ENCODE measurements at regions of chr2 and their contacts with region 1.

Region 1: DNA sequence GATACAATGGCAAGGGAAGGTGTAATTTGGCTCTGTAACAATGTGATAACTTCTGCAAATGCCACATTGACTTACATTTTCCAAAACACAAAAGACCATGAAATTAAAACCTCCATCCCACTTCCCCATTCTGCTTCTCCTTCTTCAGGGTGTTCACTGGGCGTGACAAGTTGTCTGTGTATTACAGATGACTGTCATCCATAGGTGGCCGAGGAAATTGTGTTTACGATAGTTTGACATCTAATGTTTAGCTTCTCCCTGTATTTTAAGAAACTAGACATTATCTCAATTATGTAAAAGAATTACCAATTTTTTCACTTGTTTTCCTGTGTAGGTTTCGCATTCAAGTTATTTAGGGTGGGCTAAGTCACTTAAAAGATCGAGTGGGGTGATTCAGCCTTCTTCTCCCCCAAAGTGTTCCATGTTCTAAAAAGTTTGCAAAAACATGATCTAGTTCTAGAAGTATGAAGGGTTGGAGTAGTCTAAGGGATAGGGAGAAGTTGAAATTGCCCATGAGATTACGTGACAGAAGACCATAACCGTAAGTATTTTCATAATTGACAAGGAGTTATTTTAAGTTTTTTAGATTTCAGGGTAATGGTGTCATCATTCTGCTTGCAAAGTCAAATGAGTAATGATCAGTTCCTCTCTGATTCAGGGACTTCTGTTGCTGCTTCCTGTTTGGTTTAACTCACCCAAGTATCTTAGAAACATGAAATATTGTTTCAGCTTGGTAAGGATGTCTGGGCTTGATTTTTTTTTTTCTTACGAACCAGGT is 25.2 kb upstream of the CYTIP start:
- DNase-seq: no peak
- ATAC-seq: peak; percentile 67
- H3K4me3 Mint-ChIP-seq: peak overlapping the region; percentile 68
- H3K27ac Mint-ChIP-seq: peak overlapping the region; percentile 94
- H3K4me1 Mint-ChIP-seq: peaks cover 95% of the 10 kb centered on the region
- H3K27me3 Mint-ChIP-seq: no peaks in the 10 kb centered on the region

Region 2: DNA sequence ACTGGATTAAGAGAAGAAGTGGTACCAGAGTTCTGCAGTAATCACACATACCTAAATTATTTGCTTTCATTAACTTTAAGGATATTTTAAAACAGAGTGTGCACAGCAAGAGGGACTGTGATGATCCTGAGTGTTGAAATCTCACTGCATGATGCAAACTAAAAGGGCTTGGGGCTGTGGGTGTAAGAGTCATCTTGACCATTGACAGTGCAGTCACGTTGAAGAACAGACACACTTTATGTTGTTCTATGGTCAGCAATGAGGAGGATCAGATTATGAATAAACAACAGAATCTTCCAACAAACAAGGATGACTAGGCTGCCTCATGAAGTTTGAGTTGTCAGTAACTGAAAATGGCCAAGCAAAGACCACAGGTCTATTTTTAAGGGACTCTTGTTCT is 298.8 kb before region 1 on chr2:
- CTCF ChIA-PET with region 1: no interaction called
- POLR2A ChIA-PET with region 1: no interaction called
- intact Hi-C with region 1: no loop called
- DNase-seq: no peak
- ATAC-seq: no peak
- H3K4me3 Mint-ChIP-seq: no peak overlapping the region
- H3K27ac Mint-ChIP-seq: no peak overlapping the region
- H3K4me1 Mint-ChIP-seq: no peaks in the 10 kb centered on the region
- H3K27me3 Mint-ChIP-seq: peaks cover 8% of the 10 kb centered on the region

Region 3: DNA sequence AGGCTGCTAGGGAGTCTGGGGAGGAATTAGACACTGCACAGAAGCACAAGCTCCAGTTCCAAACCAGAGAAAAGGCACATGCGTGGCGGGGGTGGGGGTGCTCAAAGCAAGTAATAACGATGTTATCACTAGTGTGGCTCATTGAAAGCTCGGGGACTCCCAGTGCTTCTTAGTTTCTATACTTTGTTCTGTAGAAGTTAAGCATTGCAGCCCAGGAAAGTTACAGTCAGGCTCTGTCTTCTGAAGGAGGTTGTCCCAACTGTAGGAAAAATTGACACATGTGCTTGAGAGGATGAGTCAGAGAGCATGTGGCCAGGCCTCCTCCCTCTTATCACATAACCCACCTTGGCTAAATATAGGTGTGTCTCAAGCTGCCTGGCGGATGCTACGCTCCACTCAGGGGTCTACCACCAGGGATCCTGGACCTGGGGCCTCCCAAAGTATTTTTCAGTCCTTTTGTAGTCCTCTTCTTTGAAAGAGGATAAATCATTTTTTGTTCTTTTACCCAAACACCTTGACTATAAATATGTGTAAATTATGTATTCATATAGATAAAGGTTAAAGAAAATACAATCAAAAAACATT is 207.8 kb before region 1 on chr2:
- CTCF ChIA-PET with region 1: no interaction called
- POLR2A ChIA-PET with region 1: no interaction called
- intact Hi-C with region 1: loop called in 1 of 2 experiments (anchors 1 kb)
- DNase-seq: peak; percentile 84
- ATAC-seq: peak; percentile 79
- H3K4me3 Mint-ChIP-seq: peak overlapping the region; percentile 4
- H3K27ac Mint-ChIP-seq: peak overlapping the region; percentile 26
- H3K4me1 Mint-ChIP-seq: peaks cover 38% of the 10 kb centered on the region
- H3K27me3 Mint-ChIP-seq: peaks cover 12% of the 10 kb centered on the region

Region 4: DNA sequence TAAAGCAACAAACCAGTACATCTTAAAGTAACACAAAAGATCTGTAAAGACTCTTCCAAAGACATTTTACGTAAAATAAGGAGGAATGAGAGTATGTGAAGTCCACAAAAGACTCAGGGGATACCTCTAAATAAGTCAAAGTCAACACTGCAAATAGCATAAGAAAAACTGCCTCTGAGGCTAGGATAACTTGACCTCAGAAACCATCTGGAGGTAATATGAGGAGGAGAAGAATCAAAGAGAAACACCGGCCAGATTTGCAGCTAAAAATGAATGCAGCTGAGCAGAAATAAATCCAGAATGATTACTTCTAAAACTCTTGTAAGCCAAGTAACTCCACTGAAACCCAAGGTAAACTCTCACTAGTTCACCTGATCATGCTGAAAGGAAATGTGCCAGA is 91.3 kb before region 1 on chr2:
- CTCF ChIA-PET with region 1: no interaction called
- POLR2A ChIA-PET with region 1: no interaction called
- intact Hi-C with region 1: no loop called
- DNase-seq: no peak
- ATAC-seq: no peak
- H3K4me3 Mint-ChIP-seq: no peak overlapping the region
- H3K27ac Mint-ChIP-seq: no peak overlapping the region
- H3K4me1 Mint-ChIP-seq: peaks cover 36% of the 10 kb centered on the region
- H3K27me3 Mint-ChIP-seq: no peaks in the 10 kb centered on the region

Region 5: DNA sequence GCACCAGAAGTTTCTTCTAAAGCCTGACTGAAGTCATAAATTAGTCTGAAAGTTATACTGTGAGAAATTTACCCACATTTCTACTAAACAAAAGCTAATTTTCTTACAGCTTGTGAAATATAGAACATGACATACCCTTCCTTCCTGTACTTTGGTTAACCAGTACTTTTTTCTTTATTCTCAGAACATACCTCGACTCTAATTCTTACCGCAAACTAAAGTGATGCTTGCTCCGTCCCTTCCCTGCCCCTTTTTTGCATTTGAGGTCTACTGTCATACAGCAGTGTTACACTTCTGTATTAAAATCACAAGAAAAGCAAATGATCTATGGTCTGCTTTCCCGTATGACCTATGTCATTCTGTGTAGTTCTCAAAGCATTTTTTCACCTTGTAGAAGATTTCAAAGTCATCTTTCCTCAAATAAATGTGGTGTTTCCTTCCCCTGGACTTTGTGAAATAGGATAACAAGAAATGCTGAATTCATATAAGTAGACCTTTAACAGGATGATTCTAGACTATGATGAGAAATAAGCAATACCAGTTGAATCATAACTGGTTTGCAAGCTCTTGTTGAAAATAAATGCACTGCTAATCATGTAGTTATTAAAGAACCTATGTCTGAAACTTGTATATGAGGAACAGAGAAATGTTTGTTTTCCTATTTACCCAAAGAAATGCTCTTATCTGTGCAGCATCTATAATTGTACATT is 55.6 kb before region 1 on chr2:
- CTCF ChIA-PET with region 1: interaction called, 3 read pairs
- POLR2A ChIA-PET with region 1: interaction called, 9 read pairs
- intact Hi-C with region 1: loop called (anchors 1 kb)
- DNase-seq: peak; percentile 64
- ATAC-seq: peak; percentile 67
- H3K4me3 Mint-ChIP-seq: peak overlapping the region; percentile 63
- H3K27ac Mint-ChIP-seq: peak overlapping the region; percentile 100
- H3K4me1 Mint-ChIP-seq: peaks cover 89% of the 10 kb centered on the region
- H3K27me3 Mint-ChIP-seq: no peaks in the 10 kb centered on the region

Region 6: DNA sequence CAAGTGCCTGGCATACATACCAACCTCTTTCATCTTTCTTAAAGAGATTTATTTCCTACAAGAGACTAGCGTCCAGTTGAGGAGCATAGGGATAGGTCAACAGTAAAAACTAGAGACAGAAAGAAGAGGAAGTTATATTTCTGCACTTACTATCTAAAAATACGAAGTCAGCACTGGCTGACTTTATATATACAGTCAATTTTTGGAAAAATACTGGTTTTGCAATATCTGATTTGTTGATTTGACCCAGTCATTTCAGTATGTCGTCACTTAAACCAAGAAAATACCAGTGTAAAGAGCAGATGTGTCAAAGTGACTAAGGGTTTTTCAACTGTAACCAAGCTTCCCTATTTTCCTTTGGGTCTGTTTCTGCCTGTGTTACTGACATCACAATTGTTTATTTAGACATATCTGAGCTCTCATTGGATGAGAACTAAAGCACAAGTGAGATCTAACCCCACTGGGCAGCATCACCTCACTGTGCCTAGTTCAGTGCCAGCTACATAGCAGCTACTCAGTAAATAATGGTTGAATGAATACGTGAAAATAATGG is 48.3 kb before region 1 on chr2:
- CTCF ChIA-PET with region 1: interaction called, 4 read pairs
- POLR2A ChIA-PET with region 1: interaction called, 7 read pairs
- intact Hi-C with region 1: loop called in 1 of 2 experiments (anchors 1 kb)
- DNase-seq: peak; percentile 60
- ATAC-seq: peak; percentile 57
- H3K4me3 Mint-ChIP-seq: peak overlapping the region; percentile 52
- H3K27ac Mint-ChIP-seq: peak overlapping the region; percentile 93
- H3K4me1 Mint-ChIP-seq: peaks cover 78% of the 10 kb centered on the region
- H3K27me3 Mint-ChIP-seq: no peaks in the 10 kb centered on the region

Region 7: GRCh38 chr2:157433394-157433793 is 35.7 kb before region 1 on chr2:
- CTCF ChIA-PET with region 1: interaction called, 20 read pairs
- POLR2A ChIA-PET with region 1: no interaction called
- intact Hi-C with region 1: loop called in 1 of 2 experiments (anchors 5 kb)
- DNase-seq: no peak
- ATAC-seq: no peak
- H3K4me3 Mint-ChIP-seq: peak overlapping the region; percentile 93
- H3K27ac Mint-ChIP-seq: peak overlapping the region; percentile 95
- H3K4me1 Mint-ChIP-seq: peaks cover 60% of the 10 kb centered on the region
- H3K27me3 Mint-ChIP-seq: no peaks in the 10 kb centered on the region

Region 8: DNA sequence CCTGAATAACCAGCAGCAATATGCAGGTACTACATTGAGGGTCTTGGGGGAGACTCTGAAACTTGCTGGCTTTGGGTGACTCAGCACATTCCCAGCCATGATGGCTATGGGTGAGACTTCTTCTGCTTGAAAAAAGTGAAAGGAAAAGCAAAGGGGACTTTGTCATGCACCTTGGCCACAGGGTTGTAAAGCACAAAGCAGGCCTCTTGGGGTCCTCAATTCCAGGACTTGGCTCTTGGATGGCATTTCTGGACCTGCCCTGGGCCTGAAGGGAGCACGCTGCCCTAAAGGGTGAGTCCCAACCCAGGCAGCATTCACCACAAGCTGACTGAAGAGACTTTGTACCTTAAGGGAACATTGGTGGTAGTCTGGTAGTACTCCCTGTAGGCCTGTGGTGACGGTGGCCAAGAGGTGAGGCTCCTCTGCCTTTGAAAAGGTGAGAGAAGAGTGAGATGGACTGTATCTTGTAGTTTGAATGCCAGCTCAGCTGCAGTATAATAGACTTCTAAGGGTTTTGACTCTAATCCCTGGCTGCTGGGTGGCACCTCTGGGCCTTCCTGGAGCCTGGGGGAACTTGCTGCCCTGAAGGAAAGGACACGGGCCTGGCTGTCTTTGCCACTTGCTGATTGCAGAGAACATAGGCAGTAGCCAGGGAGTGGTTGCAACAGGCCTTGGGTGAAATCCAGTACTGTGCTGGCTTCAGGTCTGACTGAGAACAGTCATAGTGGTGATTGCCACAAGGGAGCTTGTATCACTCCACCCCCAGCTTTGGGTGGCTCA is 11.3 kb after region 1 on chr2:
- CTCF ChIA-PET with region 1: interaction called, 13 read pairs
- POLR2A ChIA-PET with region 1: interaction called, 20 read pairs
- intact Hi-C with region 1: loop called (anchors 1 kb)
- DNase-seq: peak; percentile 81
- ATAC-seq: peak; percentile 71
- H3K4me3 Mint-ChIP-seq: peak overlapping the region; percentile 64
- H3K27ac Mint-ChIP-seq: peak overlapping the region; percentile 95
- H3K4me1 Mint-ChIP-seq: peaks cover 86% of the 10 kb centered on the region
- H3K27me3 Mint-ChIP-seq: no peaks in the 10 kb centered on the region

Measured in activated CD4-positive, alpha-beta T cell treated with anti-CD3 and anti-CD28 coated beads for 36 hours (primary cell).